Prostate gland (tissue), 2 donors: ENCODE measurements at regions of chr15 and their contacts with region 1.

Region 1: DNA sequence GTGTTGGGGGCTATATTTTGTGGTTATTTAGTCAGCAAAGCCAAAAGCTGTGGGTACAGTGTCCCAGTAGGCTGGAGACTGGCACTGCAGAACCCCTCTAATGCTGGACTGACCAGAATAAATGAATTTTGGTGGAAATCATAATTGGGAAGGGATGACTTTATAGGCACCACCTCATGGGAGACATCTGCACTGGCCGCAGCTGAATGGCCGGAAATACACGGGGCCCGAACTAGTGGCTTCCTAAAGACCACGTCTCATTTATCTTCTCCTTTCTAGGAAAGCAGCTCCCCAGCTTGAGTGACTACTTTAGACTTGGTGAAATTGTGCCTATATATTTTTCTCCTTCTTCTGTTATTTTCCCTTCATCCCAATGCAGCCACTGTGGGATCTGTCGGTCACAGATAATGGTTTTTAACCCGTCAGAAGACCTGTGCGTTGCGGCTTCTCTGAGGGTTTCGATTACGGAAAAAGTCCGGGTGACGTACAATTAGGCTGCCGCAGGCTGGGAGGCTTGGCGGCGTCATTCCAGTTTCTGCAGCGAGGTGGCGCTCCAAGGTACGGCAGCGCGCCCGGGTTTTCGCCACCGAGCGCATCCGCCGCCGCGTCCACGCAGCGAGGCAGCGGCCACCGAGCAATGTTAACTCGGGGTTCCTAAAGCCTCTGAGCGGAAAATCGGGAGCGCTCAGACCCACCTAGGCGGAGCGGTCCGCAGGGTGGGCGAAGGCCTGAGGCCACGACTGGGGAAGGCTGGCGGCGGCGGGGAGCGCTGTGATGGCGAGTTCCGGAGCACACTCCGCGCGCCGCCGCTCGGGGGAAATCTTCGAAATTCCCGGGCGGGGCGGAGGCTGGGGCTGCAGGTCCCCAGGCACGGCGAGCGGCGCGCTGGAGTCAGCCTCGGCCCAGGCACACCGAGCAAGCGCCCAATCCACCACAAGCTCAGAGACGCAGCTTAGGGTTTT is 26.3 kb downstream of the NR2F2 start:
- DNase-seq: peak; percentile 73
- H3K4me3 ChIP-seq: peak overlapping the region; percentile 55 to 56
- H3K27ac ChIP-seq: peak overlapping the region; percentile 68 to 70
- H3K4me1 ChIP-seq: no peaks in the 10 kb centered on the region
- H3K27me3 ChIP-seq: no peaks in the 10 kb centered on the region
- CTCF ChIP-seq: peak; percentile 94 to 96 (median 96)
- POLR2A ChIP-seq: no peak

Region 2: DNA sequence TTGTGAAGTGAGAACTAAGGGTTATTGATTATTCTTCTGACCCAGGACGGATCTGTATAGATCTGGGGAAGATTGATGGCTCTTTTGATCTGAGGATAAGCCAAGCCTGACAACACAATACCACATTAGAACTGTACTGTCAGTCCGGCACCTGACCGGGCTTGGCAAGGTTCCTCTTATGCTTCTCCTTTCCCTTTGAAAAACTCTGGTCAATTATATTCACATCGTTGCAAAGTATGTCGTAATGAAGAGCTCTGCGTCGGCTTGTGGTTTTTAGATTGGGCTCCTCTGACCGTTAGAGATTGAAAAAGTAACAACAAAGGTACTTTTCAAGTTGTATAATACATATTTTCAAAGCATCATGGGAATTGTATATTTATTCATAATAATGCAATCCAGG is 363.5 kb after region 1 on chr15:
- intact Hi-C with region 1: no loop called
- DNase-seq: no peak
- H3K4me3 ChIP-seq: no peak overlapping the region
- H3K27ac ChIP-seq: no peak overlapping the region
- H3K4me1 ChIP-seq: no peaks in the 10 kb centered on the region
- H3K27me3 ChIP-seq: no peaks in the 10 kb centered on the region
- CTCF ChIP-seq: no peak
- POLR2A ChIP-seq: no peak

Region 3: DNA sequence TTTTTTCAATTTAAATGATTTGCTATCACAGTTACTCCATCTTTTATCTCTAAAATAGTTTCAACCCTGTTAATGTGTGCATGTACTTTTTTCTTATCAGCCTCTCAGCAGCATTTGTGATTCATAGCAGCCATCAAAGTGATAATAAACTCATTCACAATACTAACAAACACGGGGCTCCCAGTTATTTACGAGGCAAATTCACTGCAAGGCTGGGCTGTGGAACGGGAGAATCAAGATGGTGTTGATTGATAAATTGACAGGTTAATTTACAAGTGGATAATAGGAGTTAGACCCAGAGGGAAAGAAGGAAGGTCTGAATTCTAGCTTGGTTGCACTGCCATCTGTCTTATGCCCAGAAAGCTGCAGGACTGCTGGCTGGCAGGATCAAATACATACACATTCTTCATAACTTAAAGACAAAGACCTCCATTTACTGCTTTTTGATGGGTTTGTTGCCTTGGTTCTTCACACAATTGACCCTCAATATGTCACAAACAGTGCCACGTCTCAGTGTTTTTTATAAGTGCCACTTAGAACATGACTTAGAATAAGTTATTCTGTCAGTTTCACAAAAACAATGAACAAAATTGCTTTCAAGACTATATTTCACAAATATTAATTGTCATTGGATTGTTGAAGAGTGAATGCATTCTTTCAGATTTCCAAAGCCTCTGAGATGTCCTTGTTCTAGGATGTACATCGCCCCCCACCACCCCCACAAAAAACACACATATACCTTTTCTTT is 536.6 kb after region 1 on chr15:
- intact Hi-C with region 1: loop called (anchors 5 kb)
- DNase-seq: peak; percentile 5
- H3K4me3 ChIP-seq: no peak overlapping the region
- H3K27ac ChIP-seq: no peak overlapping the region
- H3K4me1 ChIP-seq: no peaks in the 10 kb centered on the region
- H3K27me3 ChIP-seq: no peaks in the 10 kb centered on the region
- CTCF ChIP-seq: peak in 3 of 4 experiments; percentile 37 to 49 (median 47)
- POLR2A ChIP-seq: no peak

Region 4: DNA sequence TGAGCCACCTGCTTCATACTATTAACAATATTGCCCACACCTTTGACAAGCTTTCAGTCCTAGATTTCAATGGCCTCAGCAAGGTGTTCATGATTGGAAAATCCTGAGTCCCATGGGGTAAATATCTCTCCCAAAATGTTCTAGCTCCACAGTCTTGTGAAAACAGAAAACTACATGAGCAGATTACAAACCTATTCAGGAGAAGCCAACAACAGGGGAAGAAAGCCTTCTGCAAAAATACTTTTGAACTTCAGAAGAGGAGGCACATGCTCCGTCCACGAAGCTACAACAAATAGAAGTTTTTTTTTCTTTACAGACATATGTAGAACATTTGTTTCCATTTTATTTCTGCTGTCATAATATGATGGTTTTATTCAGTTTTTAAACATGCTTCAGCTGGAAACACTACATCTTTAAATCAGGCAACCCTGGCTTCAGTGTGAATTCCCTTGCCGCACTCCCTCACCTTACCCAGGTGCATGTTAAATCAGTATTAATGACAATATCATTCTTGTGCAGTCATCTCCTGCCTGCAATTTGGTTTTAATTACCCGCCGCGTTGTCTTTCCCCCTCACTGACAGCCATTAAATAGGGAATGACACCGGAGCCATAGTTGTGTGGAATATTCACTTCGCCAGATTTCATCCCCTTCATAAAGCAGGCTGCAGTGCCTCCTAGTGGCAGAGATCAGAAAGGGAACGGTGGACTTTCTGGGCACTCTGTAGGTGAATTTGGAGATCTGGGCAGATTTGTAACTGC is 878.3 kb after region 1 on chr15:
- intact Hi-C with region 1: loop called (anchors 5 kb)
- DNase-seq: no peak
- H3K4me3 ChIP-seq: no peak overlapping the region
- H3K27ac ChIP-seq: no peak overlapping the region
- H3K4me1 ChIP-seq: no peaks in the 10 kb centered on the region
- H3K27me3 ChIP-seq: no peaks in the 10 kb centered on the region
- CTCF ChIP-seq: peak; percentile 35 to 74 (median 66)
- POLR2A ChIP-seq: no peak

Region 5: GRCh38 chr15:97708252-97708651 is 1351.5 kb after region 1 on chr15:
- intact Hi-C with region 1: no loop called
- DNase-seq: no peak
- H3K4me3 ChIP-seq: no peak overlapping the region
- H3K27ac ChIP-seq: no peak overlapping the region
- H3K4me1 ChIP-seq: no peaks in the 10 kb centered on the region
- H3K27me3 ChIP-seq: no peaks in the 10 kb centered on the region
- CTCF ChIP-seq: no peak
- POLR2A ChIP-seq: no peak